Calu3 (cell line): ENCODE measurements at regions of chr9 and their contacts with region 1.

Region 1: DNA sequence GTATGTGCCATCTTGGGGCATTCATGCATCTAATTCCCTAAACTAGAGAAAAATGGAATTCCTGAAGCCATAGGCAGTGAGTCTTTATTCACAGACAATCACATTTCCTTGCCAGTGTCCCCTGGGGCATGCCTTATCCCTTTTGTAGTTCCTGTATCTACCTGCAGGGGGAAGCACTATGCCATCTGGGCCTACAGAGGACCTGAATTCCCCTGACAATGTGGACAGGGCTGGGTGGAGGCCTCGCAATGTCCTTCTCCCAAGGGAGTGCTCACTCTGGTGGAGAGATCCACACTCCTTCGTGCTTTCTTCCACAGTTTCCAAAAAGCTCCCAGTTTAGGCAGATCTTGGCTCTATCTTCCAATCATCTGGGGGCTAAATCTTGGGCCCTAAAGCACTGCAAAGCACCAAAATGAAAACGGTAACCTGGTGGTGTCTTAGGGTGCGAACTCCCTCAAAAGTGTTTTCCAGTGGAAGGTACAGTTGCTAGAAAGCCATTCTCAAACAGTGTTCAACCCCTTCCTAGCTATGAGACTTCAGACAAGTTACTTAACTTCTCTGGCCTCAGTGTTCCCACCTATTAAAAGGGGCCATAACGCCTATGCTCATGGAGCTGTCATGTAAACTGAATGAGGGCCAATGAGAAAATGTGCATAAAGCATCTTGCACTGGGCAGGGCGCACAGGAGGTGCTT is 17.5 kb downstream of the WHRN start:
- DNase-seq: peak; percentile 72
- H3K4me3 Mint-ChIP-seq: no peak overlapping the region
- H3K27ac Mint-ChIP-seq: no peak overlapping the region
- H3K4me1 Mint-ChIP-seq: peaks cover 23% of the 10 kb centered on the region
- H3K27me3 Mint-ChIP-seq: no peaks in the 10 kb centered on the region
- CTCF ChIP-seq: peak; percentile 58

Region 2: GRCh38 chr9:114434878-114435311 is 52.9 kb before region 1 on chr9:
- CTCF ChIA-PET with region 1: no interaction called
- intact Hi-C with region 1: loop called (anchors 10 kb)
- DNase-seq: peak; percentile 34
- H3K4me3 Mint-ChIP-seq: no peak overlapping the region
- H3K27ac Mint-ChIP-seq: no peak overlapping the region
- H3K4me1 Mint-ChIP-seq: no peaks in the 10 kb centered on the region
- H3K27me3 Mint-ChIP-seq: peaks cover 22% of the 10 kb centered on the region
- CTCF ChIP-seq: peak; percentile 33

Region 3: DNA sequence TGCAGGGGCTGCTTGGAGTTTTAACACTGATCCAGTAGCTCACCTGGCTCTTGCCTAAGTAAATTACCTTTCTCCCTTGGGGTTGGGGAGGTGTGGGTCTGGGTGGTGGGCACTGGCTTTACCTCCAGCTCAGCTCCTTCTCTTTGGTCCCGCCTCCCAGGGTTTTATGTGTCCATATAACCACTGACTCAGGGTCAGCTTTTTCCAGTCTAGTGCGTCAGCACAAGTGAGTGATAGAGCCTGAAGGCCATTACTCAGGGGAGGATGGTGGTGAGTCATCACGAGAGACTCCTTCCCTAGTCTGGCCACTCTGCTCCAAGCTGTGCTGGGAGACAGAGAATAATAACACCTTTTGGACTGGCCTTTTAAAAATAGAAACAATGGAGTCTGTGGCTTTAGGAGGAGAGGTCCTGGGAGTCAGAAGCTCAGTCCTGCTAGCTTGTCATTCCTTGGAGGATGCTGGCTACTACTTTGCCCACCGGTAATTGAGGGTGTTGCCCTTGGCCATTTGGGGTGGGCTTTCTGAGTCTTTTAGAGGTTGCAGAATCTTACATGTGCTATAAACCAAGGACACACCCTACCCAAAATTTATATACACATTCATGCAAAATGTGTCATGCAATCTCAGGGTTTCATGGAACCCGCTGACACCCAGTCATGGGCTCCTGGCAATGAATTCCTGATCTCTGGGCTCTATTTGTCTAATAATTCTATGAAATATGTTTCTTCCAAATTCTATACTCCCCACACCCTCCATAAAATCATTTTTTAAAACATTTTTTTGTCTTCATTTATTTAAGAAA is 64.3 kb after region 1 on chr9:
- CTCF ChIA-PET with region 1: no interaction called
- intact Hi-C with region 1: no loop called
- DNase-seq: peak; percentile 79
- H3K4me3 Mint-ChIP-seq: peak overlapping the region; percentile 19
- H3K27ac Mint-ChIP-seq: peak overlapping the region; percentile 86
- H3K4me1 Mint-ChIP-seq: peaks cover 9% of the 10 kb centered on the region
- H3K27me3 Mint-ChIP-seq: peaks cover 21% of the 10 kb centered on the region
- CTCF ChIP-seq: no peak

Region 4: DNA sequence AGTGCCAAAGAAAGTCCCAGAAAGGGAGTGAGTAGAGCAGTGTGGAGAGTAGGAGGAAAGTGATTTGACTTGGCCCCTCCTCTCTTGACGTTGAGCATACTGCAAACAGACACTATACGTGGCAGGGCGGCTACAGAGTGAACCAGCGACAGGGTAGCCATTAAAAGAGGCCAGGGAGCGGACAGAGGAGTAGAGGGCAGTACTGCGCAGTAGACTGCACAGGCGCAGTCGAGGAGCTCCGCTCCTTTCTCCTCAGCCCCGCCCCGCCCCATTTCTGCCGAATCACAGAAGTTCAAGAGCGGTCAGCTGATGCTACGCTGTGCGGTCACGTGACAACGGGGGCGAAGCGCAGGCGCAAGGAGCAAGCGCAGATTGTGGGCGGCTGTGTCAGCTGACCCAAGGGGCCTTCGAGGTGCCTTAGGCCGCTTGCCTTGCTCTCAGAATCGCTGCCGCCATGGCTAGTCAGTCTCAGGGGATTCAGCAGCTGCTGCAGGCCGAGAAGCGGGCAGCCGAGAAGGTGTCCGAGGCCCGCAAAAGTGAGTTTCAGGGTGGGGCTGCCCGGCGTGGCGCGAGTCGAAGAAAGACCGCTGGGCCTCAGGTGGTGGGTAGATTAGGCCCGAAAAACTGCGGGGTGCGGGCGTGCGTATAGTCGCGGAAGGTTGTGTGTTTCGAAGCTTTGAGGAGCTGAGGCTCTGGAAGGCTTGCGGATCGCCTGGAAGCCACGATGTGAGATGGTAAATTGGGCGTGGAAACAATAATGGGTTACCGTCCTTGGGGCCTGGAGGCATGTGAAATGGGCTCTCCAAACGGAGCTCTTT is 99.8 kb after region 1 on chr9 and contains the start of gene ATP6V1G1:
- CTCF ChIA-PET with region 1: no interaction called
- intact Hi-C with region 1: loop called (anchors 5 kb)
- DNase-seq: peak; percentile 97
- H3K4me3 Mint-ChIP-seq: peak within 1 kb of the TSS; percentile 83
- H3K27ac Mint-ChIP-seq: peak within 1 kb of the TSS; percentile 91
- H3K4me1 Mint-ChIP-seq: peaks cover 13% of the 10 kb centered on the region
- H3K27me3 Mint-ChIP-seq: peaks cover 12% of the 10 kb centered on the region
- CTCF ChIP-seq: no peak
- total RNA-seq, gene ATP6V1G1: 50.1 and 59.5 TPM in 2 replicates

Region 5: DNA sequence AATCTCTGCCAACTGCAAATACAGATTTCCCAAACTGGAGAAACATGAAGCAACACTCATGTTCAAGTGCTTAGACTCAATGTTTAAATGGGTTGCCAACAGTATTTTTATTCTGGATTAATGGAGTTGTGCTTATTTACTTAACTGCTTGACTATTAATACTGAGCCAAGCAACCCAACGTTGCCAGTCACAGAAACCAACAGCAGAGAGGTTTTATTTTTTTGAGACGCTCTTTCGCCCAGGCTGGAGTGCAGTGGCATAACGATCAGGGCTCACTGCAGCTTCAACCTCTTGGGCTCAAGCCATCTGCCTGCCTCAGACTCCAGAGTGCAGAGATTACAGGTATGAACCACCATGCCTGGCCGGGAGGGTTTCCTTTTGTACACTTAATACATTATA is 114.9 kb after region 1 on chr9:
- CTCF ChIA-PET with region 1: no interaction called
- intact Hi-C with region 1: no loop called
- DNase-seq: no peak
- H3K4me3 Mint-ChIP-seq: no peak overlapping the region
- H3K27ac Mint-ChIP-seq: no peak overlapping the region
- H3K4me1 Mint-ChIP-seq: no peaks in the 10 kb centered on the region
- H3K27me3 Mint-ChIP-seq: no peaks in the 10 kb centered on the region
- CTCF ChIP-seq: no peak